ENCODE measurements at regions of chr7 and their contacts with region 1.

Region 1: DNA sequence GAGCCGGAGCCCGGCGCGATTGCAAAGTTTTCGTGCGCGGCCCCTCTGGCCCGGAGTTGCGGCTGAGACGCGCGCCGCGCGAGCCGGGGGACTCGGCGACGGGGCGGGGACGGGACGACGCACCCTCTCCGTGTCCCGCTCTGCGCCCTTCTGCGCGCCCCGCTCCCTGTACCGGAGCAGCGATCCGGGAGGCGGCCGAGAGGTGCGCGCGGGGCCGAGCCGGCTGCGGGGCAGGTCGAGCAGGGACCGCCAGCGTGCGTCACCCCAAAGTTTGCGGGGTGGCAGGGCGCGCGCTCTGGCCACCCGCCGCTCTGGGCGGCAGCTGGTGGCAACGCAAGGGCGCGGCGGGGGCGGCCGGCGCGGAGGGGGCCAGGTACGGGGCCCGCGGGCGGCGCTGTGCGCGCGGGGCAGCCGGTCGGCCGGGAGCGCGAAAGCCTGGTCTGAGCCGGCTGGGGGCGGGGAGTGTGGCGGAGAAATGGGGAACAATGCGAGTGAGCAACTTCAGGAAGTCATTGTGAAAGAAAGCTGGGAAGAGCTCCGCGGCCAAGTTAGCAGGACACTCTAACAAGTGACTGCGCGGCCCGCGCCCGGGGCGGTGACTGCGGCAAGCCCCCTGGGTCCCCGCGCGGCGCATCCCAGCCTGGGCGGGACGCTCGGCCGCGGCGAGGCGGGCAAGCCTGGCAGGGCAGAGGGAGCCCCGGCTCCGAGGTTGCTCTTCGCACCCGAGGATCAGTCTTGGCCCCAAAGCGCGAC is at the start of gene IKZF1:
- DNase-seq: peak; percentile 72
- ATAC-seq: peak; percentile 44
- H3K4me3 Mint-ChIP-seq: peak within 1 kb of the TSS; percentile 100
- H3K27ac Mint-ChIP-seq: peak within 1 kb of the TSS; percentile 96
- H3K4me1 Mint-ChIP-seq: peaks cover 53% of the 10 kb centered on the region
- H3K27me3 Mint-ChIP-seq: no peaks in the 10 kb centered on the region
- CTCF ChIP-seq: no peak
- total RNA-seq, gene IKZF1: 301 and 325 TPM in 2 replicates

Region 2: DNA sequence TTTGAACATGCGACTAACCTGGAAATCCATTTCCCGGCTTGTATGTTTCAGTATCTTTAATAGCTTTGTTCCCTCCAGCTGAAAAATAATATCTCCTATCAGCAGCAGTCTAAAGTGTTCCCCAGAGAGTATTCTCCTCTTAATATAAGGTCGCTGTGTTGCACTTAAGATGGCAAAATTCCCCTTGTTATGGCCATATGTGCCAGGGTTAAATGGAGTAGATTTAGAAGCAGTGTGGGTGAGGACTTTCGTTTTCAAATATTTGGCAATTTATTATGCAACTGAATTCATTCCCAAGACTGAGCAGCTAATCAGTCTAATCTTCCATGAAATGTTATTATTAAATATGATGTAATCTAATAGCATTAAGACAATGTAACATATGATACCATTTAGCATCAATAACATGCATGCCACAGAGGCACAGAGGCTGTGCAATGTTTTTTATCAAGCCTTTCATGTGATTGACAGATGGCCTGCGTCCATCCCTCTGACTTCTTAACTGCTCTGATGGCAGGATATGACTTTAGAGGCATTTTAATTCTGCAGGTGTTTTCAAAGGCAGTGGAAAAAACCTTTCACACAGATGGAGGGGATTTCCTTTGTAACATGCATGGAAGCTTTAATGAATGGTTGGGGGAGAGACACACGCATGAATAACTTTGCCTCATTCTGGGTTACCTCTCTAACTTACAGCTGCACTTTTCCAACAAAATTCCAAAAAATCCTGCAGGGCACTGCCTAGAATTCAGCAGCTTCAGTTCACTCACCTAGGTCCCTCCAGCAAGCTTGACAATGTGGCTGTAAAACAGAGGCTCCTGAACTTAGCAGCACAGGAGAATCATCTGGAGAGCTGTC is 156.2 kb before region 1 on chr7:
- CTCF ChIA-PET with region 1: no interaction called
- POLR2A ChIA-PET with region 1: interaction called, 8 read pairs
- intact Hi-C with region 1: loop called (anchors 1 kb)
- DNase-seq: no peak
- ATAC-seq: peak; percentile 77
- H3K4me3 Mint-ChIP-seq: peak overlapping the region; percentile 46
- H3K27ac Mint-ChIP-seq: peak overlapping the region; percentile 95
- H3K4me1 Mint-ChIP-seq: peaks cover 93% of the 10 kb centered on the region
- H3K27me3 Mint-ChIP-seq: no peaks in the 10 kb centered on the region
- CTCF ChIP-seq: no peak

Region 3: DNA sequence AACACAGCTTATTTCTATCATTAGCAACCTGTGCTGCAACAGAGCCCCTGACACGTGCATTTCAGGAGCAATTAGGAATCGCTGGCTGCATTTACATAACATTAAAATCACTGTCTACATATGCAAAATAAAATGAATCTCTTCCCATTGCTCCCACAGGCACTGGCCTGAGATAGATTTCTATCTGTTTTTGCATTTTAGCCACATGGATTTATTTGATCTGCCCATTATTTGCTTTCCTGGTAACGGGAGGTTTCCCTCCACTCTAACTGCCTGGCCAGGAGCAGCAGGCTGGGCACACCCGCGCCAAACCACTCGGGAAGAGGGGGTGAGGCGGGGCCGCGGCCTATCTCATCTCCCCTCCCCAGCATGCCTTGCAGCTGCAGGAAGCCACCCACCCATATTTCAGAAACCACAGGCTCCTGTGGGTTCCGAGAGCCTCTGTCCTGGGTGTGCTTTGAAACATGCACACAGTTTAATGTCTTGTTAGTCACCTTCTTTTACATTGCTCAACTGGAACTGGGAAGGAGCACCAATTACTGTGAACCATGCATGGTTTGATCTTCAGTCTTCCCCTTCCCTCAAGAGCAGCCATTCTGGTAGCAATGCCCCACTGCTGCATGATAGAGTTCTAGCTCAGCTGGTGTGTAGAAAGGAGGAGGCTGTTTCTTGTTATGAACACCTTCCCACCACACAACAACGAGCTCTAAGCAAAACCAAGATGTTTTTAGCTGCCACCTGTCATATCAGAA is 37.5 kb before region 1 on chr7:
- CTCF ChIA-PET with region 1: interaction called, 6 read pairs
- POLR2A ChIA-PET with region 1: interaction called, 257 read pairs
- intact Hi-C with region 1: loop called (anchors 5 kb)
- DNase-seq: no peak
- ATAC-seq: peak; percentile 66
- H3K4me3 Mint-ChIP-seq: peak overlapping the region; percentile 78
- H3K27ac Mint-ChIP-seq: peak overlapping the region; percentile 87
- H3K4me1 Mint-ChIP-seq: peaks cover 99% of the 10 kb centered on the region
- H3K27me3 Mint-ChIP-seq: no peaks in the 10 kb centered on the region
- CTCF ChIP-seq: no peak

Region 4: GRCh38 chr7:50293509-50294179 is 10.7 kb before region 1 on chr7:
- CTCF ChIA-PET with region 1: interaction called, 6 read pairs
- POLR2A ChIA-PET with region 1: interaction called, 32 read pairs
- intact Hi-C with region 1: loop called (anchors 1 kb)
- DNase-seq: no peak
- ATAC-seq: peak; percentile 76
- H3K4me3 Mint-ChIP-seq: peak overlapping the region; percentile 9
- H3K27ac Mint-ChIP-seq: peak overlapping the region; percentile 85
- H3K4me1 Mint-ChIP-seq: peaks cover 33% of the 10 kb centered on the region
- H3K27me3 Mint-ChIP-seq: no peaks in the 10 kb centered on the region
- CTCF ChIP-seq: no peak

Region 5: GRCh38 chr7:50335795-50336754 is 31.7 kb after region 1 on chr7:
- CTCF ChIA-PET with region 1: interaction called, 15 read pairs
- POLR2A ChIA-PET with region 1: interaction called, 188 read pairs
- intact Hi-C with region 1: no loop called
- DNase-seq: peak; percentile 69
- ATAC-seq: peak; percentile 63
- H3K4me3 Mint-ChIP-seq: peak overlapping the region; percentile 74
- H3K27ac Mint-ChIP-seq: no peak overlapping the region
- H3K4me1 Mint-ChIP-seq: peaks cover 2% of the 10 kb centered on the region
- H3K27me3 Mint-ChIP-seq: no peaks in the 10 kb centered on the region
- CTCF ChIP-seq: no peak

Region 6: GRCh38 chr7:50369143-50370026 is 65.1 kb after region 1 on chr7:
- CTCF ChIA-PET with region 1: interaction called, 49 read pairs
- POLR2A ChIA-PET with region 1: interaction called, 88 read pairs
- intact Hi-C with region 1: loop called (anchors 1 kb)
- DNase-seq: no peak
- ATAC-seq: peak; percentile 66
- H3K4me3 Mint-ChIP-seq: no peak overlapping the region
- H3K27ac Mint-ChIP-seq: peak overlapping the region; percentile 74
- H3K4me1 Mint-ChIP-seq: peaks cover 94% of the 10 kb centered on the region
- H3K27me3 Mint-ChIP-seq: no peaks in the 10 kb centered on the region
- CTCF ChIP-seq: peak; percentile 50

Region 7: GRCh38 chr7:50382455-50382854 is 78.1 kb after region 1 on chr7:
- CTCF ChIA-PET with region 1: no interaction called
- POLR2A ChIA-PET with region 1: no interaction called
- intact Hi-C with region 1: no loop called
- DNase-seq: no peak
- ATAC-seq: no peak
- H3K4me3 Mint-ChIP-seq: no peak overlapping the region
- H3K27ac Mint-ChIP-seq: peak overlapping the region; percentile 88
- H3K4me1 Mint-ChIP-seq: peaks cover 73% of the 10 kb centered on the region
- H3K27me3 Mint-ChIP-seq: no peaks in the 10 kb centered on the region
- CTCF ChIP-seq: no peak